Astrocyte of the cerebellum (primary cell): ENCODE measurements at regions of chr3 and their contacts with region 1.

Region 1: GRCh38 chr3:1037631-1038030 is 55.2 kb upstream of the CNTN6 start:
- DNase-seq: no peak
- H3K4me3 ChIP-seq: no peak overlapping the region
- CTCF ChIP-seq: no peak

Region 2: DNA sequence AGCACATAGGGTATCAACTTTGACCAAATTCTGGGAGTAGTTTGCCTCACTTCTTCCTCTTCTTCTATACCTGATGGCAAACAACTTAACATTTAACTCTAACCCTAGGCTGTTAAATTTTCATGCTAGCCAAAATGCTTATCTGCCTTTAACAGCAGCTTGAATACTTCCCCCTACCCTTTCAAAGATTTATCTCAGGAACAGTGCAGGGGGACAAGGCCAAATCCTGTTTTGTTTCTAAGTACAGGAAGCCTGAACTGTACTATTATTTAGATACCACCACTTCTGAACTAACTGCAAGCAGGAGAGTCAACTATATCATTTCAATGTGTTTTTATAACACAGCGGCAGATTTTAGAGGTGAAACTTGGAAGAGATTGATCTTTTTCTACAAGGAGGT is 48.8 kb before region 1 on chr3:
- in situ Hi-C with region 1: loop called (anchors 5 kb)
- DNase-seq: no peak
- H3K4me3 ChIP-seq: no peak overlapping the region
- CTCF ChIP-seq: no peak

Region 3: DNA sequence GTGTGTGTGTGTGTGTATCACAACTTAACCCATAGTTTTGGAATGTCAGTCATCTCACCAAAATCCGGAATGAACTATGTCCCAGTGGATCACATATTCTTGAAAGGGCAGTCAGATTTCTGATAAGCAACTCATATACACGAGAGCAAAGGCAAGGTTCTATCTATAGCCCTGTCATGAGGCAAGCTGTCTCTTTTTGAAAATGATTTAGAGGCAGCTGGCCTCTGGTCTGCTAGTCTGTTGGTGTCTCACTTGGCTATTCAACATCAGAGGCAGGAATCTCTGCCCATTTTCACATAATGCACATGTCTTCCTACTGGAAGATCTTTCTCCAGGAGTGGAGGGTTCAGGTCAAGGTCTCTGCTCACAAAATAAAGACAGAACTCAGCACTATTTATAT is 135.0 kb after region 1 on chr3:
- in situ Hi-C with region 1: no loop called
- DNase-seq: no peak
- H3K4me3 ChIP-seq: no peak overlapping the region
- CTCF ChIP-seq: no peak